B cell (primary cell): ENCODE measurements at regions of chr6 and their contacts with region 1.

Region 1: DNA sequence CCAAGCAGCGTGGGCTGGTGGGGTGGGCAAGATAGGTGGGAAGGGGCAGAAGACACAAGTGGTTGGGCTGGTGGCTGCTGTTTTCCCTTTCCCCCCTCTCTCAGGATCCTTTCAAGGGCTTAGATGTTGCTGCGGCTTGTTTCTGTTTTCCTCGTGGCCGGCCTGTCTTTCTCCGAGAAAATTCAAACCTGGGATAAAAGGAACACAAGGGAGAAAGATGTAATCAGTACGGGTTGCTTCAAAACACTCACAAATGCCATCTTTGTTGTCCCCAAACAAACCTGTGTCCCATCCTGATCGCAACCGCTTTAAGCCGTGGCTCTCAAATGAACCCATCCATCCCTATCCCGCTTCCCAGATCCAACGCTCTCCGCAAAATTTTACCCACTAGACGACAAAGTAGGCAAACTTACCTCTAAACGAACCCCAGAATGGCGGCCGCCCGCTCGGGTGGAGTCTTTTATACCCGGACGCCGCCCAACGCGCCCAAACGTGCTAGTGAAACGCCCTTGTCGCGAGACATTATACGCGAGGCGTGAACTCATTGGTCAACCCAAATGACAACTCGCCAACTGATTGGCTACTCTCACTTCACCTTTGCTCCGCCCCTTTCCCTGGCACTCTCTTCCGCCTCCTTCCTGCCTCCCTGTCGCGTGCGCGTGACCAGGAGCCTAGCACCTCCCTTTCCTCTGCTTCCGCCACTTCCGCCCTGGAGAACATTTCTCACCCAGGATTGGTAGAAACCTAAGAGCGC is at the start of gene PPP1R10:
- DNase-seq: peak; percentile 100
- ATAC-seq: peak; percentile 77
- H3K4me3 ChIP-seq: peak within 1 kb of the TSS; percentile 93 to 100 (median 98)
- H3K4me3 Mint-ChIP-seq: peak within 1 kb of the TSS; percentile 92
- H3K27ac ChIP-seq: peak within 1 kb of the TSS; percentile 99
- H3K27ac Mint-ChIP-seq: peak within 1 kb of the TSS; percentile 100
- H3K4me1 ChIP-seq: peaks cover 33 to 36% of the 10 kb centered on the region in 2 donors
- H3K4me1 Mint-ChIP-seq: peaks cover 38% of the 10 kb centered on the region
- H3K27me3 ChIP-seq: no peaks in the 10 kb centered on the region
- H3K27me3 Mint-ChIP-seq: no peaks in the 10 kb centered on the region
- CTCF ChIP-seq: no peak
- total RNA-seq, gene PPP1R10: 157 and 177 TPM in 2 replicates

Region 2: GRCh38 chr6:30326526-30327260 is 290.3 kb before region 1 on chr6 and contains the start of gene TRIM39:
- CTCF ChIA-PET with region 1: no interaction called
- POLR2A ChIA-PET with region 1: interaction called, 4 read pairs
- intact Hi-C with region 1: loop called (anchors 2 kb)
- DNase-seq: peak; percentile 96
- ATAC-seq: peak; percentile 69
- H3K4me3 ChIP-seq: peak within 1 kb of the TSS; percentile 72 to 97 (median 90)
- H3K4me3 Mint-ChIP-seq: peak within 1 kb of the TSS; percentile 99
- H3K27ac ChIP-seq: peak within 1 kb of the TSS; percentile 98 to 99
- H3K27ac Mint-ChIP-seq: peak within 1 kb of the TSS; percentile 99
- H3K4me1 ChIP-seq: peaks cover 21 to 31% of the 10 kb centered on the region in 2 donors
- H3K4me1 Mint-ChIP-seq: peaks cover 52% of the 10 kb centered on the region
- H3K27me3 ChIP-seq: no peaks in the 10 kb centered on the region
- H3K27me3 Mint-ChIP-seq: no peaks in the 10 kb centered on the region
- CTCF ChIP-seq: no peak
- total RNA-seq, gene TRIM39: 28.2 and 31.4 TPM in 2 replicates

Region 3: DNA sequence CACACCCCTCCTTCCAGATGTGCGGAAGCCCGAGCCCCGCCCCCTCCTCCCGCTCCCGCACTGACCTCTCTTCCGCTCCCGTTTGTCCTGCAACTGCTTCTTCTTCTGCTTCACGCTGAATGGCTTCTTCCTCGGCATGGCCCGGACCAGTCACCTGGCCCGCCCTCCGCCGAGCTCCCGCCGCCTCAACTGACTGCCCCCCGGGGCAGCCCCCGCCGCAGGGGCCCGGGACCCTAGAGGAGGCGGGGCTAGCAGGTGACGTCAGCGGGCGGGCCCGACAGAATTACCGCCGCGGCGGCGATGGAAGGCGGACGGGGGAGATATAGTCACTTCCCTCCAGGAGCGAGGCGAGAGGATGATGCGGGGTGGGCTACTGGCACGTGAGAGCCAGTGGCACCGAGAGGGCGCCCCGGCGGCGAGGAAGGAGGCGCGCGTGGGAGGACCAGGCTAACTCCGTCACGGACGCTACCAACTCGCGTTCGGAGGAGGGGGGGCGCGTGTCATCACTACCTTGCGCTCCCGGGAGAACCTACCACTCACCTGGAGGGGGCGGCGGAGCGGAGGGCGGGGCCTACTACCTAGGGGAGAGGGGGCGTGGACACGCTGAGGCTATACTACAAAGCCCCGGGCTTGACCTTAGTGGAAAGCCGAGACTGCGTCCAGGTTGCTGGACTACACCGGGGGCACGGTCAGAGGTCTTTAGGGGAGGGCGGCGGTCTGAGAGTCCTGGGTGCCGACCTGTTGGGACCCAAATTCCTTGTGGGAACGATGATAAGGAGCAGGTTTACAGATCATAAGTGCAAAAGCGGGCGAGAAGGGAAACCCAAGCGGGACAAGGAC is 60.7 kb before region 1 on chr6 and contains the start of gene GNL1:
- CTCF ChIA-PET with region 1: interaction called, 4 read pairs
- POLR2A ChIA-PET with region 1: interaction called, 16 read pairs
- intact Hi-C with region 1: loop called (anchors 1 kb)
- DNase-seq: peak; percentile 100
- ATAC-seq: peak; percentile 89
- H3K4me3 ChIP-seq: peak within 1 kb of the TSS; percentile 81 to 100 (median 94)
- H3K4me3 Mint-ChIP-seq: peak within 1 kb of the TSS; percentile 99
- H3K27ac ChIP-seq: peak within 1 kb of the TSS; percentile 91 to 95
- H3K27ac Mint-ChIP-seq: peak within 1 kb of the TSS; percentile 99
- H3K4me1 ChIP-seq: peaks cover 19 to 27% of the 10 kb centered on the region in 2 donors
- H3K4me1 Mint-ChIP-seq: peaks cover 32% of the 10 kb centered on the region
- H3K27me3 ChIP-seq: no peaks in the 10 kb centered on the region
- H3K27me3 Mint-ChIP-seq: no peaks in the 10 kb centered on the region
- CTCF ChIP-seq: no peak
- total RNA-seq, gene GNL1: 107 and 109 TPM in 2 replicates

Region 4: GRCh38 chr6:30600451-30600961 is 16.5 kb before region 1 on chr6:
- CTCF ChIA-PET with region 1: interaction called, 16 read pairs
- POLR2A ChIA-PET with region 1: interaction called, 10 read pairs
- intact Hi-C with region 1: loop called (anchors 2 kb)
- DNase-seq: no peak
- ATAC-seq: no peak
- H3K4me3 ChIP-seq: no peak overlapping the region
- H3K4me3 Mint-ChIP-seq: no peak overlapping the region
- H3K27ac ChIP-seq: no peak overlapping the region
- H3K27ac Mint-ChIP-seq: no peak overlapping the region
- H3K4me1 ChIP-seq: peaks cover 0 to 6% of the 10 kb centered on the region in 2 donors
- H3K4me1 Mint-ChIP-seq: peaks cover 6% of the 10 kb centered on the region
- H3K27me3 ChIP-seq: no peaks in the 10 kb centered on the region
- H3K27me3 Mint-ChIP-seq: no peaks in the 10 kb centered on the region
- CTCF ChIP-seq: no peak

Region 5: GRCh38 chr6:30678964-30679726 is 62.2 kb after region 1 on chr6:
- CTCF ChIA-PET with region 1: interaction called, 9 read pairs
- POLR2A ChIA-PET with region 1: interaction called, 22 read pairs
- intact Hi-C with region 1: loop called (anchors 1 kb)
- DNase-seq: peak; percentile 92
- ATAC-seq: peak; percentile 29
- H3K4me3 ChIP-seq: peak overlapping the region in 4 of 5 experiments; percentile 31 to 100 (median 37)
- H3K4me3 Mint-ChIP-seq: peak overlapping the region; percentile 65
- H3K27ac ChIP-seq: peak overlapping the region in 1 of 2 donors; percentile 97
- H3K27ac Mint-ChIP-seq: peak overlapping the region; percentile 99
- H3K4me1 ChIP-seq: peaks cover 38 to 39% of the 10 kb centered on the region in 2 donors
- H3K4me1 Mint-ChIP-seq: peaks cover 51% of the 10 kb centered on the region
- H3K27me3 ChIP-seq: no peaks in the 10 kb centered on the region
- H3K27me3 Mint-ChIP-seq: no peaks in the 10 kb centered on the region
- CTCF ChIP-seq: peak; percentile 94

Region 6: DNA sequence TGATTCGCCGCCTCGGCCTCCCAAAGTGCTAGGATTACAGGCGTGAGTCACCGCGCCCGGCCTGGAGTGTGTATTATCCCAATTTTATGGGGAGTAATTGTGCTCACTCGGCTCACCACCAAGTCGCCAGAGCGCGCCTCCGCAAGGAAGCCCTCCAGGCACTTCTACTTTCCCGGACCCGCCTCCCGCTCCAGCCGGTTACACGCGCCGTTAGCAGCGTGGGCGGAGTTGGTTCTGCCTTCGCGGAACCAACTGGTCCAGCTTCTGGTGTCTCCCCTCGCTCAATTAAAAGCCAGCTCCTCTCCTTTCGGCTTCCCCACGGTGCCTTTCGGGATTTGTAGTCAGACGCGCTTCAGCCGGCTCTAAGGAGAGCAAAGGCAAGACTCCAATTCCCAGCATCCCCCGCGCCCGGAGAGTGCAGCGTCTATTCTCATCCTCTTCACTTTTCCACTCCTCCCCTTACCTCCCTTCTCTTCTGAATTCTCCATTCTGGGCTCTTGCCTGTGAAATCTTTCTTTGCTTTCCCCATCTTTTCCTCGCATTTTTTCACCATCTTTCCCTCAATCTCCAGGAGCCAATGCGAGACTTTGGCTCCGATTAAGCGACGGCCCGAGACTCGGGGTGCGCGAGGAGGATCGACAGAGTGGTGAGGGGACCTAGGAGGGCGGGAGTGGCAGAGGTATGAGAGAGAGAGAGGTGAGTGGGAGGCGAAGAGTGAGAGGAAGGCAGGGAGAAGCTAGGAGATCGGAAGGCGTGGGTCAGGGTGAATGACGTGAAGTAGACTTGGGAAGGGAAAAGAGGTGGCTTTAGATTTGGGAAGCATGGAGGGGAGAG is 291.0 kb after region 1 on chr6 and contains the start of gene GTF2H4:
- CTCF ChIA-PET with region 1: no interaction called
- POLR2A ChIA-PET with region 1: interaction called, 9 read pairs
- intact Hi-C with region 1: loop called (anchors 5 kb)
- DNase-seq: peak; percentile 95
- ATAC-seq: peak; percentile 97
- H3K4me3 ChIP-seq: peak within 1 kb of the TSS; percentile 71 to 99 (median 89)
- H3K4me3 Mint-ChIP-seq: peak within 1 kb of the TSS; percentile 100
- H3K27ac ChIP-seq: peak within 1 kb of the TSS in 1 of 2 donors; percentile 43
- H3K27ac Mint-ChIP-seq: peak within 1 kb of the TSS; percentile 88
- H3K4me1 ChIP-seq: peaks cover 14 to 28% of the 10 kb centered on the region in 2 donors
- H3K4me1 Mint-ChIP-seq: peaks cover 21% of the 10 kb centered on the region
- H3K27me3 ChIP-seq: no peaks in the 10 kb centered on the region
- H3K27me3 Mint-ChIP-seq: no peaks in the 10 kb centered on the region
- CTCF ChIP-seq: no peak
- total RNA-seq, gene GTF2H4: 38.4 and 44.7 TPM in 2 replicates